Activated CD8-positive, alpha-beta T cell treated with anti-CD3 and anti-CD28 coated beads, Interleukin-2, amount 10 ng/mL, durations not matched to agents 7 days and 5 days (primary cell): ENCODE measurements at regions of chr13 and their contacts with region 1.

Region 1: GRCh38 chr13:24160454-24161009 is at the start of gene SPATA13:
- DNase-seq: peak; percentile 94
- ATAC-seq: peak; percentile 92
- H3K4me3 Mint-ChIP-seq: peak within 1 kb of the TSS; percentile 88
- H3K27ac Mint-ChIP-seq: peak within 1 kb of the TSS; percentile 82
- H3K4me1 Mint-ChIP-seq: peaks cover 40% of the 10 kb centered on the region
- H3K27me3 Mint-ChIP-seq: peaks cover 3% of the 10 kb centered on the region
- total RNA-seq, gene SPATA13: 57.4 to 63.2 TPM

Region 2: GRCh38 chr13:23763318-23763717 is 397.2 kb before region 1 on chr13:
- CTCF ChIA-PET with region 1: no interaction called
- POLR2A ChIA-PET with region 1: no interaction called
- DNase-seq: no peak
- ATAC-seq: no peak
- H3K4me3 Mint-ChIP-seq: no peak overlapping the region
- H3K27ac Mint-ChIP-seq: no peak overlapping the region
- H3K4me1 Mint-ChIP-seq: no peaks in the 10 kb centered on the region
- H3K27me3 Mint-ChIP-seq: no peaks in the 10 kb centered on the region

Region 3: DNA sequence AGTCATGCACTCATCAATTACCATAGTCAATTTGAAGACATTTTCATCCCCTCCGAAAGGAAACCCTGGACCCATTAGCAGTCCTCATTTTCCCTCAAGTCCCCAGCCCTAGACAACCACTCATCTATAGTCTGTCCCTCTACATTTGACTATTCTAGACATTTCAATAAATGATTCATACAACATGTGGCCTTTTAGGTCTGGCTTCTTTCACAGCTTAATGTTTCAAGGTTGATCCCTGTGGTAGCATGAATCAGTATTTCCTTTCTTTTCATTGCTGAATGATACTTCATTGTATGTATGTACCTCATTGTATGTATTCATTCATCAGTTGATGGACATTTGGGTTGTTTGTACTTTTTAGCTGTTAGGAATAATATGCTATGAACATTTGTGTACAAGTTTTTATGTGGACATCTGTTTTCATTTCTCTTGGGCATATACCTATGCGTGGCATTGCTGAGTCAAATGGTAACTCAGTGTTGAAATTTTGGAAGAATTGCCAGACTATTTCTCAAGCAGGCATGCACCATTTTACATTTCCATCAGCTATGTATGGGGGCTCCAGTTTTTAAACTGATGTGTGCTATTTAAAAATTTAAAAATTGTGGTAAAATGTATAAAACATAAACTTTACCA is 18.4 kb after region 1 on chr13:
- CTCF ChIA-PET with region 1: interaction called, 11 read pairs
- POLR2A ChIA-PET with region 1: interaction called, 6 read pairs
- DNase-seq: no peak
- ATAC-seq: no peak
- H3K4me3 Mint-ChIP-seq: no peak overlapping the region
- H3K27ac Mint-ChIP-seq: no peak overlapping the region
- H3K4me1 Mint-ChIP-seq: peaks cover 39% of the 10 kb centered on the region
- H3K27me3 Mint-ChIP-seq: no peaks in the 10 kb centered on the region

Region 4: GRCh38 chr13:24459234-24459633 is 298.7 kb after region 1 on chr13:
- CTCF ChIA-PET with region 1: no interaction called
- POLR2A ChIA-PET with region 1: no interaction called
- DNase-seq: no peak
- ATAC-seq: peak; percentile 57
- H3K4me3 Mint-ChIP-seq: no peak overlapping the region
- H3K27ac Mint-ChIP-seq: peak overlapping the region; percentile 74
- H3K4me1 Mint-ChIP-seq: peaks cover 20% of the 10 kb centered on the region
- H3K27me3 Mint-ChIP-seq: no peaks in the 10 kb centered on the region